ENCODE measurements at regions of chr3 and their contacts with region 1.

Region 1: GRCh38 chr3:107271787-107272387 is 105.4 kb upstream of the CCDC54 start:
- DNase-seq: peak in 4 of 5 donors; percentile 15 to 27 (median 21)
- H3K4me3 ChIP-seq: no peak overlapping the region
- H3K4me3 Mint-ChIP-seq: no peak overlapping the region
- H3K27ac ChIP-seq: no peak overlapping the region
- H3K27ac Mint-ChIP-seq: no peak overlapping the region
- H3K4me1 ChIP-seq: no peaks in the 10 kb centered on the region
- H3K4me1 Mint-ChIP-seq: no peaks in the 10 kb centered on the region
- H3K27me3 ChIP-seq: no peaks in the 10 kb centered on the region
- H3K27me3 Mint-ChIP-seq: peaks cover 10 to 24% of the 10 kb centered on the region in 2 donors

Region 2: GRCh38 chr3:107284612-107285011 is 12.7 kb after region 1 on chr3:
- CTCF ChIA-PET with region 1: interaction called, 16 read pairs
- POLR2A ChIA-PET with region 1: no interaction called
- intact Hi-C with region 1: no loop called
- DNase-seq: no peak
- H3K4me3 ChIP-seq: no peak overlapping the region
- H3K4me3 Mint-ChIP-seq: no peak overlapping the region
- H3K27ac ChIP-seq: no peak overlapping the region
- H3K27ac Mint-ChIP-seq: no peak overlapping the region
- H3K4me1 ChIP-seq: no peaks in the 10 kb centered on the region
- H3K4me1 Mint-ChIP-seq: peaks cover 0 to 2% (median under 1%) of the 10 kb centered on the region in 4 donors
- H3K27me3 ChIP-seq: no peaks in the 10 kb centered on the region
- H3K27me3 Mint-ChIP-seq: peaks cover 7 to 12% of the 10 kb centered on the region in 2 donors

Region 3: GRCh38 chr3:107429320-107430181 is 157.7 kb after region 1 on chr3:
- CTCF ChIA-PET with region 1: interaction called, 22 read pairs
- POLR2A ChIA-PET with region 1: no interaction called
- intact Hi-C with region 1: no loop called
- DNase-seq: peak; percentile 54 to 68 (median 61)
- H3K4me3 ChIP-seq: peak overlapping the region in 1 of 2 donors; percentile 51
- H3K4me3 Mint-ChIP-seq: peak overlapping the region; percentile 84 to 96 (median 90)
- H3K27ac ChIP-seq: no peak overlapping the region
- H3K27ac Mint-ChIP-seq: peak overlapping the region in 4 of 7 donors; percentile 17 to 64 (median 35)
- H3K4me1 ChIP-seq: peaks cover 18% of the 10 kb centered on the region
- H3K4me1 Mint-ChIP-seq: peaks cover 15 to 27% (median 19%) of the 10 kb centered on the region in 4 donors
- H3K27me3 ChIP-seq: no peaks in the 10 kb centered on the region
- H3K27me3 Mint-ChIP-seq: peaks cover 0 to 2% of the 10 kb centered on the region in 2 donors

Region 4: GRCh38 chr3:107522510-107523288 is 250.8 kb after region 1 on chr3 and contains the start of gene BBX:
- CTCF ChIA-PET with region 1: no interaction called
- POLR2A ChIA-PET with region 1: no interaction called
- intact Hi-C with region 1: loop called (anchors 10 kb)
- DNase-seq: peak; percentile 92 to 98 (median 96)
- H3K4me3 ChIP-seq: peak within 1 kb of the TSS; percentile 70 to 88
- H3K4me3 Mint-ChIP-seq: peak within 1 kb of the TSS; percentile 97 to 99 (median 98)
- H3K27ac ChIP-seq: peak within 1 kb of the TSS; percentile 87
- H3K27ac Mint-ChIP-seq: peak within 1 kb of the TSS; percentile 88 to 98 (median 97)
- H3K4me1 ChIP-seq: peaks cover 29% of the 10 kb centered on the region
- H3K4me1 Mint-ChIP-seq: peaks cover 21 to 29% (median 25%) of the 10 kb centered on the region in 4 donors
- H3K27me3 ChIP-seq: no peaks in the 10 kb centered on the region
- H3K27me3 Mint-ChIP-seq: no peaks in the 10 kb centered on the region
- total RNA-seq, gene BBX: 93.9 to 99.1 TPM

Region 5: DNA sequence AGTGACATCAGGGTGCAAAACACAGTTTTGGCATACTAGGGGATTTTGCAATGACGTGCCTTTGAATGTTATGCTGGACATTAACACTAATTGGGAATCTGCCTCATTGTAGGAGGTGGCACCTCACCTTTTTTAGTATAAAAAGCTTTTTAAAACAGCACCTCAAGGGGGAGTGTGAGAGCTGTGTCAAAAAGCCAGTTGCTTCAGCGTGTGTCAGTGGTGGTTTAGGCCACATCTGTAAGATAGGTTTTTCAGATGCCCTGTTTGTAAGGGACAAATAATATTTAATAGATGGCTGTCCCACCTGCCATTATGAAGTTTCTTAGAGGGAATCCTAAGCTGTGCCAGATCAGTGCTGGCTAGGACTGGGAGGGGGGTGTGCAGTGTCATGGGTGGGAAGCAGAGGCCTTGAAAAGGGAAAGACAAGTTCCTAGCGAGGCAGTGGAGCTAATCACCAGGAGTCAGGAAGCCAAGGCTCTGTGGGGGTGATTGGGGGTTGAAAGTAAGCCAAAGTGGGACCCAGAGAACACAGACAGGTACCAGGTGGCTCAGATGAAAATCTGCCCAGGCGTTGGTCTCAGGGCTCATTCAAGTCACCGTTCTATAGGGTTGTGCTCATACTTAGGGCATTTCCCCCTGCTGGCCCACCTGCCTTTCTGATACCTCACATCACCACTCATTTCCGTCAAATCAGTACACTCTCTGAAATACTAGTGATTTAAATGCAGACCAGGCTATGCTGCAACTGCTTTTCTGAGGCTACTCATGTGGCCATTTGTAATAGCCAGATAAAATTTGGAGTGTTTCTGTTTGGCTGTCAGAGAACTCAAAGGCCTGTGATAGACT is 371.4 kb after region 1 on chr3:
- CTCF ChIA-PET with region 1: no interaction called
- POLR2A ChIA-PET with region 1: no interaction called
- intact Hi-C with region 1: no loop called
- DNase-seq: no peak
- H3K4me3 ChIP-seq: no peak overlapping the region
- H3K4me3 Mint-ChIP-seq: no peak overlapping the region
- H3K27ac ChIP-seq: no peak overlapping the region
- H3K27ac Mint-ChIP-seq: peak overlapping the region in 1 of 7 donors; percentile 8
- H3K4me1 ChIP-seq: no peaks in the 10 kb centered on the region
- H3K4me1 Mint-ChIP-seq: peaks cover 0 to 30% (median 17%) of the 10 kb centered on the region in 4 donors
- H3K27me3 ChIP-seq: no peaks in the 10 kb centered on the region
- H3K27me3 Mint-ChIP-seq: no peaks in the 10 kb centered on the region

Region 6: DNA sequence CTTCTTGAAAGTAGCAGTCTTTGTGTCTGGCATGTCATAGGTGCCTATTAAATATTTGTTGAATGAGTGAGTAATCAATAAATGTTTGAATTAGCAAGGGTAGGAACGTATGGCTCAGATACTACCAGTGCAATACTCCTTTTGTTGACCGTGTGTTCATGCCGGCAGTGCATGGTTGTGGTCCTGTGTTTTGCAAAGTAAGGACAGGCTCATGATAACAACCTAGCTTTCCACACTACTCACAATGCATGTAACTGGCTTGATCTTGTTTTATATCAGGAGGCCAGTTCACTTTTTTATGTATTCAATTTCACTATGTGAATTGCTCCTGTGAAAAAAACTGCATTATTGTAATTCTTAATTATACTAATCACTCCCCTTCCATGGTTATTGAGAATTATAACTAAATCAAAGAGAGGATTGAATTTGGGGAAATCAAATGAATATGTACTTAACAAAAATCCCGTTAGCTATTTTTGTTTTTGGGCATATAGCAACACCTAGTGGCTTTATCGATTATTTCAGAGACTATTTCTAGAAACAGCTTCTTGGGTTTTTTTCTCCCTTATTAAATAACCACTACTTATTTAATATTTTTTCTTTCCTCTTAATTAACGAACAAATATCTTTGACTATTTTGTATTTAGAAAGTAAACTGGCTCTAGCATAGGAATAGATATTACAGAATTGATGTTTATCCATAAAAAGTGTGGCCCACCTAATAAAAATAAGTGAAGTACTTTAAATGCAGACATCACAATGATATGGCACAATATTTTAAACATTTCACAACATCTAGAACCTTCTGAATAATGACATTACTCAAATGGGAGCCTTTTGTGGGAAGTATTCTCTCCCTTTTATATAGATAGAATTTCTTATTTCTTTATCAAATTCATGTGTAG is 469.4 kb after region 1 on chr3:
- CTCF ChIA-PET with region 1: interaction called, 3 read pairs
- POLR2A ChIA-PET with region 1: no interaction called
- intact Hi-C with region 1: loop called (anchors 1 kb)
- DNase-seq: peak in 4 of 5 donors; percentile 13 to 28 (median 23)
- H3K4me3 ChIP-seq: no peak overlapping the region
- H3K4me3 Mint-ChIP-seq: no peak overlapping the region
- H3K27ac ChIP-seq: no peak overlapping the region
- H3K27ac Mint-ChIP-seq: no peak overlapping the region
- H3K4me1 ChIP-seq: no peaks in the 10 kb centered on the region
- H3K4me1 Mint-ChIP-seq: peaks cover 0 to 7% (median under 1%) of the 10 kb centered on the region in 4 donors
- H3K27me3 ChIP-seq: no peaks in the 10 kb centered on the region
- H3K27me3 Mint-ChIP-seq: no peaks in the 10 kb centered on the region